Activated CD8-positive, alpha-beta T cell treated with anti-CD3 and anti-CD28 coated beads for 36 hours (primary cell): ENCODE measurements at regions of chr16 and their contacts with region 1.

Region 1: GRCh38 chr16:53549970-53550690 is 47.1 kb upstream of the AKTIP start:
- DNase-seq: peak; percentile 64
- ATAC-seq: peak; percentile 80
- H3K4me3 Mint-ChIP-seq: no peak overlapping the region
- H3K27ac Mint-ChIP-seq: no peak overlapping the region
- H3K4me1 Mint-ChIP-seq: peaks cover 14% of the 10 kb centered on the region
- H3K27me3 Mint-ChIP-seq: peaks cover 18% of the 10 kb centered on the region
- CTCF ChIP-seq: peak; percentile 83

Region 2: GRCh38 chr16:53518550-53519416 is 31.3 kb before region 1 on chr16:
- CTCF ChIA-PET with region 1: interaction called, 10 read pairs
- POLR2A ChIA-PET with region 1: no interaction called
- intact Hi-C with region 1: no loop called
- DNase-seq: peak; percentile 92
- ATAC-seq: peak; percentile 86
- H3K4me3 Mint-ChIP-seq: peak overlapping the region; percentile 70
- H3K27ac Mint-ChIP-seq: peak overlapping the region; percentile 96
- H3K4me1 Mint-ChIP-seq: peaks cover 47% of the 10 kb centered on the region
- H3K27me3 Mint-ChIP-seq: peaks cover 11% of the 10 kb centered on the region
- CTCF ChIP-seq: no peak

Region 3: DNA sequence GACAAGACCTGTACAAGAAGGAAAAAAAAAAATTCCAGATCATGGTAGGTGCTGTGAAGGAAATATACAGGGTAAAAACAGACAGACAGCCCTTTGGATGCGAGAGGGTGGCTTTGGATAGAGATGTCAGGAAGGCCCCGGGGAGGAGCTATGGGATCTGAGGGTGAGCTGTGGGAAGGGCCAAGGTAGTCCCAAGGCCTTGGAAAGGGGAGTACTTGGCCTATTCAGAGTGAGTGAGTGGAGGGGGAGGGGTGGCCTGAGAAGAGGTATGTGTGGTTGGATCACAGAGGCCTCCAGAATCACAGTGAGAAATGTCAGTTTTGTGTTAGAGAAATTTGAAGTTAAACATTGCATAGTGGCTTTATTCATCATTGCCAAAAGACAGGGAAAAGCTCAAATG is 15.9 kb before region 1 on chr16:
- CTCF ChIA-PET with region 1: interaction called, 17 read pairs
- POLR2A ChIA-PET with region 1: interaction called, 6 read pairs
- intact Hi-C with region 1: no loop called
- DNase-seq: no peak
- ATAC-seq: no peak
- H3K4me3 Mint-ChIP-seq: no peak overlapping the region
- H3K27ac Mint-ChIP-seq: peak overlapping the region; percentile 52
- H3K4me1 Mint-ChIP-seq: peaks cover 24% of the 10 kb centered on the region
- H3K27me3 Mint-ChIP-seq: no peaks in the 10 kb centered on the region
- CTCF ChIP-seq: no peak

Region 4: DNA sequence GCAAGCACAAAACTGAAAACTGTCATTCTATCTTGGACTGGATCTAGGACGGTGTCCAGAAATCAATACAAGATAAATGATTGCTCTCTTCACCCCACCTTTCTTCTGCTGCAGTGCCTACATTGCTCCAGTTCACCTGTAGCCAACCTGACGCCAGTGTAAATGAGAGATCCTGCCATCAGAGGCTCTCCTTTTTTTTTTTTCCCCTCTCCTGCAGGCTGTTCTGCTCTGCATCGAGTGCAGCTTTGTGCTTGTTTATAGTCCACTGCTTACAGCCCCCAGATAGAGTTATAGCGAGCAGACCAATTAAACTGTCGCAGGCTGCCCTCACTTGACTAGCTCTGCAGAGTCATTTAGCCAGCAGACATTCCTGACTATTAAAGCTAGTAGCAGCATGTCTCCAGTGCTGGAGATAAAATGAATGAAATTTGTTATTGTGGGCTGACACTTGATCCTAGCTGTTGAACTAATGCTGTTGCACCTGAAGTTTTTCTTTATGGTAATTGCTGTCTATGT is 410.9 kb after region 1 on chr16:
- CTCF ChIA-PET with region 1: no interaction called
- POLR2A ChIA-PET with region 1: no interaction called
- intact Hi-C with region 1: no loop called
- DNase-seq: no peak
- ATAC-seq: no peak
- H3K4me3 Mint-ChIP-seq: no peak overlapping the region
- H3K27ac Mint-ChIP-seq: no peak overlapping the region
- H3K4me1 Mint-ChIP-seq: no peaks in the 10 kb centered on the region
- H3K27me3 Mint-ChIP-seq: no peaks in the 10 kb centered on the region
- CTCF ChIP-seq: no peak